ENCODE measurements at regions of chr11 and their contacts with region 1.

Region 1: DNA sequence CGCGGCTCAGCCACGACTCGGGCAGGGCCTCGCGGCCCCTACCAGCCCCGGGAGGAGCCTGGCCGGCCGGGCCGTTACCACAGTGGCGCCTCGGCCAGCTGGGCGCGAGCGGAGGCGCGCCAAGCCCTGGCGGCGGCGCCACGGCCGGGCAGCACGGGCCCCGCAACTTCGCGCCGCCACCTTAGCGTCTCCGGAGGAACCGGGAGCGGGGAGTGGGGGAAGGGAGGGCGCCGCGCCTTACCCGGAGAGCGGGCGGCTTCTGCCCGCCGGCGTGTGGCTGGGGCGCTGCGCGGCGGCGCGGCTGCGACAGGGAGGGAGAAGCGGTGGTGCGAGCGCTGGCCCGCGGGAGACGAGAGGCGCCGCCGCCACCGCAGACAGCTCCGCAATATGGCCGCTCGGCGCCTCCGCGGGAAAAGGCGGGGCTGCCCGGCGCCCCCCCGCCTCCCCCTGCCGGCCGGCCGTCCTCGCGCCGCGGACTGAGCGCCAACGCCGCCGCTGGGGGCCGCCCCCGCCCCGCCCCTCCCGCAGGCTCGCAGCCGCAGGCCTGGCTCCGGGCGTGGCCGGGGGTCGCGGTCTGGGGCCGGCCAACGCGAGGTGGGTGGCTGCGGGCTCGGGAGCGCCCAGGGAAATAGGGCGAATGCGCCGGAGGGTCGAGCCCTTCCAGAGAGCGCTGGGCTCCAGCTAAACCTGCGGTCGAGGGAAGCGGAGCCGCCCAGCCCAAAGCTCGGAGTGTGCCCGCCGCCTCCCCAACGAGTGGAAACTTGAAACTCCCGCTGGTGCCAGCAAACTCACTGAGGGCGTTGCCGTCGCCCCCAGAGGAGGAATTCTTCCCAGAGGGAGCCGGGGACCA is at the start of gene RDX:
- DNase-seq: peak; percentile 86
- total RNA-seq, gene RDX: 118 TPM

Region 2: GRCh38 chr11:110362971-110363509 is 66.6 kb after region 1 on chr11:
- intact Hi-C with region 1: loop called (anchors 10 kb)
- DNase-seq: no peak